CD4-positive, alpha-beta T cell (primary cell): ENCODE measurements at regions of chr1 and their contacts with region 1.

Region 1: GRCh38 chr1:162854245-162854882 is 6.6 kb downstream of the CCDC190 start:
- DNase-seq: peak; percentile 7 to 70 (median 28)
- ATAC-seq: peak; percentile 51
- H3K4me3 ChIP-seq: no peak overlapping the region
- H3K4me3 Mint-ChIP-seq: no peak overlapping the region
- H3K27ac ChIP-seq: no peak overlapping the region
- H3K27ac Mint-ChIP-seq: no peak overlapping the region
- H3K4me1 ChIP-seq: no peaks in the 10 kb centered on the region
- H3K4me1 Mint-ChIP-seq: no peaks in the 10 kb centered on the region
- H3K27me3 ChIP-seq: no peaks in the 10 kb centered on the region
- H3K27me3 Mint-ChIP-seq: peaks cover 14% of the 10 kb centered on the region
- CTCF ChIP-seq: peak; percentile 76

Region 2: DNA sequence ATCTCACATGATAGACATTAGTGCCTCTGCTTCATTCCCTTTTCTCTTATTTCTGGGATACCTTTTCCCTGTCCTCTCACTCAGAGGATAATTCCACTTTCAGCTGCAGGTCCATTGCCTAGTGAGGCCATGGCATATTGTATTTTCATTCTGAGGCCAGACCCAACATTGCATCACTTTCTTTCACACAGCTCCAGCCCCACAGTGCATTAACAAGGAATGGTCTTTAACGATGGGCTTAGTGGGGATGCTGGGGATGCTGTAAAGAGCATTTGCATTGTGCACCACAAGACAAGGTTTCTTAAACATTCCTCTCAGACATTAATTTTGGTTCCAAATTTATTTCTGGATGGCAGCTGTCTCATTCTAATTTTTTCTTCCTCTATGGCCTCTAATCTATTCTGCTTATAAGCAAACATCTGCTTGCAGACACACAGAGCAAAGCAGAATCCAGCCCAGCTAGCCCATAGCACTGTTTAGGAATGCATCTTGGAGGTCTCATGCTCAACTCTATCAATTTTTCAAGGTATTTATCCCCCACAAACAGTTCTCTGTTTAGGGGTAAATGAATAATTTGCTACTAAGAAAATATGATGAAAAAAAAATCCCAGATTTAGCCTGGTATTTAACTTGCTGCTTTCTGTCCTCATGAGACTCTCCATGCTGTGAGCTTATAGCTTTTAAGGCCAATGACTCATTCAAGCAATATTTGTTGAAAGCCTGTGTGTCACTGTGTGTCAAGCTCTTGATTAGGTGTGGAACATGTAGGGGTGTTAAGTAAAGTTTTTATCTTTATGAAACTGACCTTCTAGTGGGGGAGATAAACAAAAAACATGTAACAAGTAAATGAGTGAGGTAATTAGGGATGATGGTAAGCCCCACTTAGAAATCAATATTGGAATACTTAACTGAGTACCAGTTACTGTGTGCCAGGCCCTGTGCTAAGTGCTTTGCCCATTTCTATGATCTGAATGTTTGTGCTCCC is 51.1 kb after region 1 on chr1:
- CTCF ChIA-PET with region 1: no interaction called
- POLR2A ChIA-PET with region 1: no interaction called
- intact Hi-C with region 1: no loop called
- DNase-seq: no peak
- ATAC-seq: no peak
- H3K4me3 ChIP-seq: no peak overlapping the region
- H3K4me3 Mint-ChIP-seq: no peak overlapping the region
- H3K27ac ChIP-seq: no peak overlapping the region
- H3K27ac Mint-ChIP-seq: no peak overlapping the region
- H3K4me1 ChIP-seq: no peaks in the 10 kb centered on the region
- H3K4me1 Mint-ChIP-seq: no peaks in the 10 kb centered on the region
- H3K27me3 ChIP-seq: no peaks in the 10 kb centered on the region
- H3K27me3 Mint-ChIP-seq: no peaks in the 10 kb centered on the region
- CTCF ChIP-seq: no peak

Region 3: DNA sequence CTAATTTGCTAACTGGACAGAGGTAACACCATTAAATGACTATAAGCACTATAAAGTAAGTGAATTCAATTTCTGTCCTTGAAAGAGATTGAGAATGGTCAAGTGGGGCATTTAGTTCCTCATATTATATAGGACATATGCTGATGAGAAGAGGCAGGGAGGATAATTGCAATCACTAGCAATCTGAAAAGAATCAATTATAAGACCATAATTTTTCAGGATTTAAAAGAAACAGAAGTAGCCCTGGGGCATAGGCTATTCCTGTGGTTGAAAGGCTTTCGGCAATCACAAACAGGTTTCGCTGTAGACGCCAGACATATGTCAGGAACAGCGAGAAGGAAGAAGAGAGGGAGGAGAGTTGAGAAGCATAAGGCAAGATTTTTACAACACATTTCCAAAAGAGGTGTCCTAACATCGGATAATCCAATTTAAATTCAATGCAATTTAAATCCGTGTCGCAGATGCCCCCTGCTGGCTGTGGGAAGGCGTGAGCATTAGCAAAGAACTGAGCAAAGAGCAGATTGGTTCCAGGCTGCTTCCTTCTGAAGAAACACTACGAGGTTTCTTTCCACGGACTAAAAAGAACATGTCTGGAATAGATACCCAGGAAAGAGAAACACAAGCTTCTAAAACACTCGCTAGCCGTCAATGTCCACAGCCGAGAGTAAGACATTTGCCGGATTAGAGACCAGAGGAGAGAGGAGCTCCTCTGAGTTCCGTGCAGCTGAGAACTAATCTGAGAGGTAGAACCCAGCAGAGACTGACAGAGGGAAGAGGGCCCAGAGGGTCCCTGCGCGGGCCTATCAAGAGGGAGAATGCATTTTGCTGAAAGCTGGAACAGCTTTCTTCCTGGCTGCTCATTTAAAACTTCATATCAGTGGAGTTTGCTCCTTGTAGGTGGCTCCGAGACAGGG is 320.4 kb after region 1 on chr1:
- CTCF ChIA-PET with region 1: no interaction called
- POLR2A ChIA-PET with region 1: no interaction called
- intact Hi-C with region 1: loop called (anchors 5 kb)
- DNase-seq: peak in 10 of 14 experiments; percentile 1 to 41 (median 12)
- ATAC-seq: no peak
- H3K4me3 ChIP-seq: no peak overlapping the region
- H3K4me3 Mint-ChIP-seq: no peak overlapping the region
- H3K27ac ChIP-seq: no peak overlapping the region
- H3K27ac Mint-ChIP-seq: no peak overlapping the region
- H3K4me1 ChIP-seq: no peaks in the 10 kb centered on the region
- H3K4me1 Mint-ChIP-seq: no peaks in the 10 kb centered on the region
- H3K27me3 ChIP-seq: no peaks in the 10 kb centered on the region
- H3K27me3 Mint-ChIP-seq: peaks cover 10% of the 10 kb centered on the region
- CTCF ChIP-seq: peak; percentile 57

Region 4: DNA sequence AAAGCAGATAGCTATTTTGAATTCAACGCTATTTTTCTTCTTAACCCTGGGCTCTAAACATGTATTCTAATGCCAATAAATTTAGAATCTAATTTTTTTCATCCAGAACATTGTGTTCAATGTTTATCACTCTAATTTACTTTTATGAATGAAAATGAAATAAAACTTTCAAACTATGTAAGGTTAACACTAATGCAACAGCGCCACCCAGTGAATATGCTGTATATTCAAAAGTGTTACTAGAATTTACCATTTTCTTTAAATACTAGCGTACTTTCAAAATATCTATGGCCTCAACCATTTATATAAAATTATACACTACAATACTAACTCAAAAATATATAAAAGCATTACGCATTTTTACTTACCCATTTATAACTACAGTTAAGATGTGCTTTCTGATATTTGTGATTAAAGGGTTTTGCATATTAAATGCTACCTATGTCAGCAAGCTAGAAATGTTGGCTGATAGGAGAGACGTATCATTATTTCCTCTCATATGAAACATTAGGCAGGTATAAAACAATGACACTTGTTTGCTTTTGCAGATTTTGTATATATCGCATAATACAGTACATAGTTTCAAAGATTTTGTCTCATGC is 461.5 kb after region 1 on chr1:
- CTCF ChIA-PET with region 1: interaction called, 10 read pairs
- POLR2A ChIA-PET with region 1: interaction called, 5 read pairs
- intact Hi-C with region 1: loop called (anchors 1 kb)
- DNase-seq: peak in 12 of 14 experiments; percentile 6 to 71 (median 26)
- ATAC-seq: no peak
- H3K4me3 ChIP-seq: no peak overlapping the region
- H3K4me3 Mint-ChIP-seq: no peak overlapping the region
- H3K27ac ChIP-seq: no peak overlapping the region
- H3K27ac Mint-ChIP-seq: no peak overlapping the region
- H3K4me1 ChIP-seq: peaks cover 2% of the 10 kb centered on the region
- H3K4me1 Mint-ChIP-seq: peaks cover 4% of the 10 kb centered on the region
- H3K27me3 ChIP-seq: no peaks in the 10 kb centered on the region
- H3K27me3 Mint-ChIP-seq: no peaks in the 10 kb centered on the region
- CTCF ChIP-seq: peak; percentile 68

Region 5: DNA sequence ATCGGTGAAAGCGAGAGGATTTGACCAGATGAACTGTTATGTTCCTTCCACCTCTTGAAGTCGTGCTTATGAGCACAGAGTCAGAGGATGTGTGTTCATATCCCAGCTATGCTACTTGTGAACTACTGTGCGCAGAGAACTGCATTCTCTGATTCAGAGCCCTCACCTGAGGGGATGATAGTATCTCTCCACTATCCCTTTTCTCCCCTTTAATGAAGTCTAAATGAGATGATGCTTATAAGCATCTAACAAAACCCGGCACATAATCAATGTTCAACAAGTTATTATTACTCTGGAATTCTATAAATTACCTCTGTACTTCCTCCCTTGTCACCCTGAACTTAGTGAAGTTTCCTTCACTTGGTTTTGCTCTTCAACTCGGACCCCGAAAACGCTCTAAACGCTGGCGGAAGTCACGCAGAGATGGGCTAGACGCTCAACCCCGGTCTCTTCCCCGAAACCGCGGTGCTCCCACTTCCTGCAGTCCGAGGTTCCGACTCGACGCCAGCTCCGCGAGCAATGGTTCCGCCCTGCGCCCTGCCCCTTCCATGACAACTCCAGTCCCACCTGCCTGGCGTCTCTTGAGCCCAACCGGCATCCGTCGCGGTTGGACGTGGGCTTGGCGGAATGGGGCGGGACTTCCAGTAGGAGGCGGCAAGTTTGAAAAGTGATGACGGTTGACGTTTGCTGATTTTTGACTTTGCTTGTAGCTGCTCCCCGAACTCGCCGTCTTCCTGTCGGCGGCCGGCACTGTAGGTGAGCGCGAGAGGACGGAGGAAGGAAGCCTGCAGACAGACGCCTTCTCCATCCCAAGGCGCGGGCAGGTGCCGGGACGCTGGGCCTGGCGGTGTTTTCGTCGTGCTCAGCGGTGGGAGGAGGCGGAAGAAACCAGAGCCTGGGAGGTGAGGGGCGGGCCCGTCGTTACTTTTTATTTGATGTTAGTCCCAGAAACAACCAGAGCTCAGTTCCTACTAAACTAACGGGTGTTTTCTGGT is 467.2 kb after region 1 on chr1 and contains the start of gene NUF2:
- CTCF ChIA-PET with region 1: interaction called, 10 read pairs
- POLR2A ChIA-PET with region 1: interaction called, 5 read pairs
- intact Hi-C with region 1: loop called in 1 of 2 experiments (anchors 2 kb)
- DNase-seq: peak; percentile 93 to 98 (median 96)
- ATAC-seq: peak; percentile 96
- H3K4me3 ChIP-seq: peak within 1 kb of the TSS; percentile 74
- H3K4me3 Mint-ChIP-seq: peak within 1 kb of the TSS; percentile 84
- H3K27ac ChIP-seq: peak within 1 kb of the TSS; percentile 53 to 55
- H3K27ac Mint-ChIP-seq: peak within 1 kb of the TSS; percentile 86
- H3K4me1 ChIP-seq: peaks cover 6% of the 10 kb centered on the region
- H3K4me1 Mint-ChIP-seq: peaks cover 23% of the 10 kb centered on the region
- H3K27me3 ChIP-seq: no peaks in the 10 kb centered on the region
- H3K27me3 Mint-ChIP-seq: no peaks in the 10 kb centered on the region
- CTCF ChIP-seq: no peak
- total RNA-seq, gene NUF2: 1.8 TPM